Mammary epithelial cell (primary cell): ENCODE measurements at regions of chr5 and their contacts with region 1.

Region 1: DNA sequence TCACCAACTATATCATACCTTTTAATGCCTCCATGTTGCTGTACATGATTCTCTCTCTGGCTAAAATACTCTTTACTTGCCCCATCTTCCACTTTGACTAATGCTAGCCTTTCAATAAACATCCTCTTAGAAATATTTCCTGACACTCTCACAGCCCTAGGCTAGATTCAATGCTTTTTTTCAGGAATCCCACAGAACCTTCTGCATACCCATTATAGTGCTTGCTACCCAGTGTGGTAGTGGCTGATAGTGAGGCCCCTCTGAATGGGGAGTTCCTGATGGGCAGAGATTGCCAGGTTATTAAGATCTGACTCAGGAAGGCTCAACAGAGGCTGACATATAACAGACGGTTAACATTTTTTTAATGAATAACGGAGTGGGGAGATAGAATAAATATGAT is 11.6 kb downstream of the SSBP2 start:
- DNase-seq: no peak
- H3K4me3 ChIP-seq: no peak overlapping the region
- H3K27ac ChIP-seq: no peak overlapping the region
- H3K4me1 ChIP-seq: no peaks in the 10 kb centered on the region
- H3K27me3 ChIP-seq: no peaks in the 10 kb centered on the region
- CTCF ChIP-seq: no peak

Region 2: GRCh38 chr5:81675846-81676245 is 63.4 kb before region 1 on chr5:
- CTCF ChIA-PET with region 1: no interaction called
- dilution Hi-C with region 1: no loop called
- in situ Hi-C with region 1: no loop called
- intact Hi-C with region 1: no loop called
- DNase-seq: no peak
- H3K4me3 ChIP-seq: no peak overlapping the region
- H3K27ac ChIP-seq: no peak overlapping the region
- H3K4me1 ChIP-seq: no peaks in the 10 kb centered on the region
- H3K27me3 ChIP-seq: no peaks in the 10 kb centered on the region
- CTCF ChIP-seq: no peak

Region 3: DNA sequence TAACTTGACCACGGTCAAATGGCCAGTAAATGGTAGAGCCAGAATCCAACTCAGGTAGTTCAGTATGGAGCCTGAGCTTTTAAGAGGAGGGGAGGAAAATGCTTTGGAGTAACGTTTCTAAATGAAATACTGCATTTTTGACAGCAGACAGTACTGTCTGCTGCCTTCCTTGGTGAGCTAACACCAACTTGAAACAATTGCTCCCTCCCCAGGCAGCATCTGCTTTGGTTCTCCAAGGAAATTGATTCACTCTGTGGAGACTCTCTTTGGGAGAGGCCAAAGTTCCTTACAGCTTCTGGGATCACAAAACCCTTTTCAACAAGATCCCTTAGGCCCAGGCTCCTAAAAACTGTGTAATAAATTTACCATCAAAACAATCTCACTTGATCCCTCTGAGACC is 86.8 kb after region 1 on chr5:
- CTCF ChIA-PET with region 1: no interaction called
- dilution Hi-C with region 1: loop called (anchors 5 kb)
- in situ Hi-C with region 1: no loop called
- intact Hi-C with region 1: no loop called
- DNase-seq: no peak
- H3K4me3 ChIP-seq: no peak overlapping the region
- H3K27ac ChIP-seq: no peak overlapping the region
- H3K4me1 ChIP-seq: peaks cover 7% of the 10 kb centered on the region
- H3K27me3 ChIP-seq: no peaks in the 10 kb centered on the region
- CTCF ChIP-seq: peak in 1 of 2 donors; percentile 46